ENCODE measurements at regions of chr14 and their contacts with region 1.

Region 1: GRCh38 chr14:55807059-55807499 is 227.1 kb downstream of the KTN1 start:
- DNase-seq: peak; percentile 98
- H3K4me3 Mint-ChIP-seq: peak overlapping the region; percentile 42
- H3K27ac Mint-ChIP-seq: peak overlapping the region; percentile 97
- H3K4me1 Mint-ChIP-seq: peaks cover 47% of the 10 kb centered on the region
- H3K27me3 Mint-ChIP-seq: no peaks in the 10 kb centered on the region
- CTCF ChIP-seq: no peak

Region 2: GRCh38 chr14:55780156-55780946 is 26.7 kb before region 1 on chr14:
- CTCF ChIA-PET with region 1: interaction called, 3 read pairs
- POLR2A ChIA-PET with region 1: interaction called, 23 read pairs
- intact Hi-C with region 1: no loop called
- DNase-seq: peak; percentile 82
- H3K4me3 Mint-ChIP-seq: no peak overlapping the region
- H3K27ac Mint-ChIP-seq: peak overlapping the region; percentile 65
- H3K4me1 Mint-ChIP-seq: peaks cover 26% of the 10 kb centered on the region
- H3K27me3 Mint-ChIP-seq: no peaks in the 10 kb centered on the region
- CTCF ChIP-seq: no peak

Region 3: GRCh38 chr14:55789430-55789829 is 17.6 kb before region 1 on chr14:
- CTCF ChIA-PET with region 1: interaction called, 12 read pairs
- POLR2A ChIA-PET with region 1: interaction called, 13 read pairs
- intact Hi-C with region 1: no loop called
- DNase-seq: peak; percentile 43
- H3K4me3 Mint-ChIP-seq: no peak overlapping the region
- H3K27ac Mint-ChIP-seq: no peak overlapping the region
- H3K4me1 Mint-ChIP-seq: peaks cover 9% of the 10 kb centered on the region
- H3K27me3 Mint-ChIP-seq: no peaks in the 10 kb centered on the region
- CTCF ChIP-seq: no peak

Region 4: DNA sequence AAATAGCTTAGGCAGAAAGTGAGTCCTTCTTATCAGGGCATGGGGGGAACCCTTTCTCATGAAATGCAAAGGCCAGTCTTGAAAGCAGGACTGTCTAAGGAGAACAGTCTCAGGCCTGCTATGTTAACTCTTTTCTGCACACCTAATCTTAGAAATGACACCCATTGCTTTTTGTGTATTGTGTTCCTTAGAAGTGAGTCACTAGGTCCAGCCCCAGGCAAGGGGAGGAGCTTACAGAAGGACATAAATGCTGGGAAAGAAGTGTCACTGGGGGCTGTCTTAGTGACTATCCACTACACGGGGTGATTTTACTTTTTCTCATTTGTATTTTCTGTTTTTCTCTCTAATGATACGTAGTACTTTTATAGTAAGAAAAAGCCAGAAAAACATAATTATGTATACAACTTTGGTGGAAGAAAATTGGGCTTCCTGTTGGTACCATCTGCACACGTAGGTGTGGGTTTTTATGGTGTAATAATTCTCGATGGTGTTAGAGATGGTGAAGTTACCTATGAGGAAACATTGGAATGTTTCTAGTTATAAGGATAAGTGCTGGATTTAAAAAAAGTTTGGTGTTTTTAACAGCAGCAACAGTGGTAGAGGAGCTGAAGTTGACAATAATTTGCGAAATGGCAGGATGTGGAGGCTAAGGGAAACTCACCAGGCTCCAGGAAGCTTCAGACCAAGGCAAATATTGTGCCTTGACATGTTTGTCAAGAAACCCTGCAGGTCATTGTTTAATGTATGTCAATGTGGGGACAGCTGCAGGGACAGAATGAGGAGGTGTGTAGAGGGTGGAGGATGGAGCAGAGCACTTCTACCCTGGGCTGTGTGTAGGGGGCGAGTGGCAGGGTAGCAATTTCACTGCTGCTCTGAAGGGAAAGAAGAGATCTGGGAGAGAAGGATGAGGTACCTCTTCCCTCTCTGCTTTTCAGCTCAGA is 12.2 kb before region 1 on chr14:
- CTCF ChIA-PET with region 1: interaction called, 12 read pairs
- POLR2A ChIA-PET with region 1: interaction called, 13 read pairs
- intact Hi-C with region 1: no loop called
- DNase-seq: peak; percentile 88
- H3K4me3 Mint-ChIP-seq: no peak overlapping the region
- H3K27ac Mint-ChIP-seq: no peak overlapping the region
- H3K4me1 Mint-ChIP-seq: peaks cover 9% of the 10 kb centered on the region
- H3K27me3 Mint-ChIP-seq: no peaks in the 10 kb centered on the region
- CTCF ChIP-seq: no peak

Region 5: DNA sequence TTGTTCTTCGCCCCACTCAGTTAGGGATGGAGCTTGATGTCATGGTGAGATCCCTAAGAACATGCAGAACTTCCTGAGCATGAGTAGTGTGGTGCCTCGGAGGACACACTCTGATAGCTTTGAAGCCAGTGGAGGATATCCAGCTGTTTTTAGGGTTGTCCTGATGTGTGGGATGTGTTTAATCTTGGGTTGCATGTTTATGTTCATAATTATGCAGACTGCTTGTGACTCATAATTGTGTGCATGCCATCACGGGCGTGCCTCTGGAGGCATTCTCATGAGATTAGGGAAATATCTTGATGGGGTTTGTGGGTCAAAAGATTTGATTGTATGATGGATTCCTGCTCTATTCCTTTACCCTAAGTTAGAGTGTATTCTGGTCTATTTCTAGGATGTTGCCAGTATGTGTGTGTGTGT is 43.8 kb after region 1 on chr14:
- CTCF ChIA-PET with region 1: interaction called, 12 read pairs
- POLR2A ChIA-PET with region 1: interaction called, 8 read pairs
- intact Hi-C with region 1: no loop called
- DNase-seq: peak; percentile 31
- H3K4me3 Mint-ChIP-seq: no peak overlapping the region
- H3K27ac Mint-ChIP-seq: peak overlapping the region; percentile 29
- H3K4me1 Mint-ChIP-seq: peaks cover 25% of the 10 kb centered on the region
- H3K27me3 Mint-ChIP-seq: no peaks in the 10 kb centered on the region
- CTCF ChIP-seq: no peak

Region 6: GRCh38 chr14:56023531-56024135 is 216.6 kb after region 1 on chr14:
- CTCF ChIA-PET with region 1: no interaction called
- POLR2A ChIA-PET with region 1: no interaction called
- intact Hi-C with region 1: no loop called
- DNase-seq: no peak
- H3K4me3 Mint-ChIP-seq: no peak overlapping the region
- H3K27ac Mint-ChIP-seq: no peak overlapping the region
- H3K4me1 Mint-ChIP-seq: no peaks in the 10 kb centered on the region
- H3K27me3 Mint-ChIP-seq: no peaks in the 10 kb centered on the region
- CTCF ChIP-seq: no peak